Activated CD4-positive, alpha-beta memory T cell treated with anti-CD3 and anti-CD28 coated beads for 36 hours (primary cell): ENCODE measurements at regions of chr2 and their contacts with region 1.

Region 1: DNA sequence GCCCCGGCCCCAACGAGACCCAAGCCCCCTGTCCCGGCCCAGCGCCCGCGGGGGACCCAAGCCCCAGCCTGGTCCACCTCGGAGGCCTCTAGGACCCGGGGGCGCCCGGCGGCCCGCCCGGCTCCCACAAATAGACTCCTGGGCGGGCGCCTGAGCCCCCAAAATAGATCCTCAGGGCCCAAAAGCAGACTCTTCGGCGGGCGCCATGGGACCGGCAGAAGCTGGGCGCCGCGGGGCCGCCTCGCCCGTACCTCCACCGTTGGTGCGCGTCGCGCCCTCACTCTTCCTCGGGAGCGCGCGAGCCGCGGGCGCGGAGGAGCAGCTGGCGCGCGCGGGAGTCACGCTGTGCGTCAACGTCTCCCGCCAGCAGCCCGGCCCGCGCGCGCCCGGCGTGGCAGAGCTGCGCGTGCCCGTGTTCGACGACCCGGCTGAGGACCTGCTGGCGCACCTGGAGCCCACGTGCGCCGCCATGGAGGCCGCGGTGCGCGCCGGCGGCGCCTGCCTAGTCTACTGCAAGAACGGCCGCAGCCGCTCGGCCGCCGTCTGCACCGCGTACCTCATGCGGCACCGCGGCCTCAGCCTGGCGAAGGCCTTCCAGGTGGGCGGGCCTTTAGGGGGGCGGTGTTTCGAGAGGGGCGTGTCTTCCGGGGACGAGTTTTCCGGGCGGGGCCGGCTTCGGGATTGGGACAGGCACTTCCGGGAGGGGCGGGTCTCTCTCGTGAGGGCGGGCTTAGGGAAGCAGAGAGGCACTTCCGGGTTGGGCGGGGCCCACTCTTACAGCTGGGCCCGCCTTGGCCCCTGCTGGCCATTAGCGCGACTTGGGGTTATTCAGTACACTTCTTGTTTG is 546 bp downstream of the DUSP28 start:
- DNase-seq: peak; percentile 100
- H3K4me3 Mint-ChIP-seq: peak overlapping the region; percentile 88
- H3K27ac Mint-ChIP-seq: peak overlapping the region; percentile 89
- H3K4me1 Mint-ChIP-seq: peaks cover 75% of the 10 kb centered on the region
- H3K27me3 Mint-ChIP-seq: no peaks in the 10 kb centered on the region

Region 2: DNA sequence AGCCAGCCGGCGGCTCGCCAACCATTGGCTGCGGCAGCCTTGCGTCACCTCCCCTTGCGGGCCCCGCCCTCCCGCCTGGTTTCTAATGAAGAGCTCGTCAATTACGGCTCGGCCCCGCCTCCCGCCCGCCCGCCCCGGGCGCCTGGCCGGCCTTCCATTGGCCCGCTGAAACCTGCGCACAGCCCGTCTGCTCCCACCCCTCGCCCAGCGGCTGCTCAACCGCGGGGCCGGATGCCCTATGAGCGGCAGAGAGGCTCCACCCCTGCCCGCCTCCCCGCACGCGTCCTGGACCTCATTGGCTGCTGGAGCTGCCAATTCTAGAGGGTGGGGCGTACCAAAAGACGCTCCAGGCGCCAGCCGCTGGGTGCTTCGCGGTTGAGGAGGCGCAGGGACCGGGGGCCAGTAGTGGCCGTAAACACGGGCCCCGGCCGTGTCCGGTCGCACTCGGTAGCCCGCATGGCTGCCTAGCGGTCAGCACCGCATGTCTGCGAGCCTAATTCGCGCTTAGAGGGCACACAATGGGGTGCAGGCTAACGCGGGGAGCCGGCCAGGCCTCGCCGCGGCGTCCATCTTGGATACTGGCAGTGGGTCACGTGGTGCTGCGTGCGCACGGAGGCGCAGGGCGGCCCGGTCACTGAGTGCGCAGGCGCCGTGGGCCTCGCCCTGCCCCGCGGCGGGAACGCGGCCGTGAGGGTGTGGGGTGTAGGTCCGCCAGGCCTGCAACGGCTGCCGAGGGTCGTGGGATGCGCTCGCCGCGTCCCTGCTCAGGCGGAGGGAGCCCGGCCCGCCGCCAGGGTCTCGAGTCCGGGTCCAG is 1159.4 kb before region 1 on chr2:
- CTCF ChIA-PET with region 1: no interaction called
- POLR2A ChIA-PET with region 1: no interaction called
- intact Hi-C with region 1: loop called (anchors 10 kb)
- DNase-seq: peak; percentile 99
- H3K4me3 Mint-ChIP-seq: peak overlapping the region; percentile 89
- H3K27ac Mint-ChIP-seq: peak overlapping the region; percentile 97
- H3K4me1 Mint-ChIP-seq: peaks cover 35% of the 10 kb centered on the region
- H3K27me3 Mint-ChIP-seq: no peaks in the 10 kb centered on the region

Region 3: GRCh38 chr2:240136013-240136670 is 424.6 kb before region 1 on chr2 and contains the start of gene COPS9:
- CTCF ChIA-PET with region 1: no interaction called
- POLR2A ChIA-PET with region 1: no interaction called
- intact Hi-C with region 1: loop called (anchors 10 kb)
- DNase-seq: peak; percentile 91
- H3K4me3 Mint-ChIP-seq: peak within 1 kb of the TSS; percentile 92
- H3K27ac Mint-ChIP-seq: peak within 1 kb of the TSS; percentile 69
- H3K4me1 Mint-ChIP-seq: peaks cover 25% of the 10 kb centered on the region
- H3K27me3 Mint-ChIP-seq: no peaks in the 10 kb centered on the region
- total RNA-seq, gene COPS9: 85.2 to 99.9 TPM

Region 4: DNA sequence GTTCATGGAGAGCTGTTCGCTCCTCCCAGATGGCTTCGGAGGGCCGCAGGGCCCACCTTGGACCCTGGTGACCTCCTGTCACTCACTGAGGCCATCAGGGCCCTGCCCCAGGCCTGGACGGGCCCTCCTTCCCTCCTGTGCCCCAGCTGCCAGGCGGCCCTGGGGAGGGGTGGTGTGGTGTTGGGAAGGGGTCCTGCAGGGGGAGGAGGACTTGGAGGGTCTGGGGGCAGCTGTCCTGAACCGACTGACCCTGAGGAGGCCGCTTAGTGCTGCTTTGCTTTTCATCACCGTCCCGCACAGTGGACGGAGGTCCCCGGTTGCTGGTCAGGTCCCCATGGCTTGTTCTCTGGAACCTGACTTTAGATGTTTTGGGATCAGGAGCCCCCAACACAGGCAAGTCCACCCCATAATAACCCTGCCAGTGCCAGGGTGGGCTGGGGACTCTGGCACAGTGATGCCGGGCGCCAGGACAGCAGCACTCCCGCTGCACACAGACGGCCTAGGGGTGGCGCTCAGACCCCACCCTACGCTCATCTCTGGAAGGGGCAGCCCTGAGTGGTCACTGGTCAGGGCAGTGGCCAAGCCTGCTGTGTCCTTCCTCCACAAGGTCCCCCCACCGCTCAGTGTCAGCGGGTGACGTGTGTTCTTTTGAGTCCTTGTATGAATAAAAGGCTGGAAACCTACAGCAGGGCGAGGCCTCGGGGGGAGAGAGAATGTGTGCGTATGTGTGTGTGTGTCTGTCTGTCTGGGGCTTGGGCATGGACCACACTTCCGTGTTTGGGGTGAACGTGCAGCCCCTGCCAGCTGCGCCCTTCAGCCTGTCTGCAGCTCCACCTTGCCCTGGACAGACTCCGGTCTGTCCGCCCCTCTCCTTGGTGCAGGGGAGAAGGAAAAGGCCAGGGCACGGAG is 93.1 kb before region 1 on chr2:
- CTCF ChIA-PET with region 1: no interaction called
- POLR2A ChIA-PET with region 1: no interaction called
- intact Hi-C with region 1: no loop called
- DNase-seq: peak; percentile 7
- H3K4me3 Mint-ChIP-seq: no peak overlapping the region
- H3K27ac Mint-ChIP-seq: no peak overlapping the region
- H3K4me1 Mint-ChIP-seq: no peaks in the 10 kb centered on the region
- H3K27me3 Mint-ChIP-seq: no peaks in the 10 kb centered on the region

Region 5: GRCh38 chr2:240579771-240580614 is 19.3 kb after region 1 on chr2:
- CTCF ChIA-PET with region 1: interaction called, 89 read pairs
- POLR2A ChIA-PET with region 1: interaction called, 34 read pairs
- intact Hi-C with region 1: loop called (anchors 1 kb)
- DNase-seq: peak; percentile 91
- H3K4me3 Mint-ChIP-seq: no peak overlapping the region
- H3K27ac Mint-ChIP-seq: peak overlapping the region; percentile 90
- H3K4me1 Mint-ChIP-seq: peaks cover 39% of the 10 kb centered on the region
- H3K27me3 Mint-ChIP-seq: no peaks in the 10 kb centered on the region

Region 6: DNA sequence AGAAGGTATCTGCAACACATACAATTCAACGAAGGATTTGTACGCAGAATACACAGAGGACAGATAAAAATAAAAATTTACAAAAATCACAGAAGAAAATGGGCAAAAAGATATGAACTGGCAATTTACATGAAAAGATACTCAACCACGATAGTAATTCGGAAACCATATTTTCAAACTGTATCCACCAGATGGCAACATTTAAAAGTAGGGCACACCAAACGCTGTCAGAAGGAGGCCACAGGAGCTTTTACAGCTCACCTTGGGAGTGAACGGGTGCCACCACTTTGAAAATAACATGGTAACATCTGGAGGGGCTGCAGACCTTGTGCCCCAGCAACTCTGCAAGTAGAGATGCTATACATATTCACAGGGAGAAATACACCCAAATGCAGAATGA is 249.5 kb after region 1 on chr2:
- CTCF ChIA-PET with region 1: no interaction called
- POLR2A ChIA-PET with region 1: no interaction called
- intact Hi-C with region 1: no loop called
- DNase-seq: no peak
- H3K4me3 Mint-ChIP-seq: no peak overlapping the region
- H3K27ac Mint-ChIP-seq: no peak overlapping the region
- H3K4me1 Mint-ChIP-seq: no peaks in the 10 kb centered on the region
- H3K27me3 Mint-ChIP-seq: no peaks in the 10 kb centered on the region

Region 7: DNA sequence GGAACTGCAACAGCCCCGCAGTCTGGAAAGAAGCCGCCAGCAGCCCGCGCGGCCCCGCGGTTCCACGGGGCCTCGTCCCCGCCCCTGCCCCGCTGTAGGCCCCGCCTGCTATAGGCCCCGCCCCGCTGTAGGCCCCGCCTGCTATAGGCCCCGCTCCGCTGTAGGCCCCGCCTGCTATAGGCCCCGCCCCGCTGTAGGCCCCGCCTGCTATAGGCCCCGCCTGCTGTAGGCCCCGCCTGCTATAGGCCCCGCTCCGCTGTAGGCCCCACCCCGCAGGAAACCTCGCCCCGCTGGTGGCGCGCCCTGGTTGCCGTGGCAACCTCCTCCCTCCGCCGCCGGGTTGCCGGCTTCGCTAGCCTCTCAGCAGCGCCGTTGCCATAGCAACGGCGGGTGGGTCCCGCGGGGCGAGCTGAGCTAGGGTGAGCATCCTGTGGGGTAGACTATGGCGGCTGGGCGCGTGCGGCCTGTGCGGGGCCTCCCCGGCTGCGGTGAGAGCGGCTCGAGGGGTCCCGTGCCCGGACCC is 271.6 kb after region 1 on chr2:
- CTCF ChIA-PET with region 1: no interaction called
- POLR2A ChIA-PET with region 1: no interaction called
- intact Hi-C with region 1: loop called (anchors 1 kb)
- DNase-seq: peak; percentile 97
- H3K4me3 Mint-ChIP-seq: peak overlapping the region; percentile 68
- H3K27ac Mint-ChIP-seq: no peak overlapping the region
- H3K4me1 Mint-ChIP-seq: no peaks in the 10 kb centered on the region
- H3K27me3 Mint-ChIP-seq: peaks cover 15% of the 10 kb centered on the region